Heart left ventricle (tissue), 16 donors: ENCODE measurements at regions of chr20 and their contacts with region 1.

Region 1: GRCh38 chr20:36754656-36755222 is 8.8 kb upstream of the NDRG3 start:
- DNase-seq: peak in 2 of 5 donors; percentile 51 to 52
- ATAC-seq: peak; percentile 72 to 93 (median 92)
- H3K4me3 ChIP-seq: no peak overlapping the region
- H3K27ac ChIP-seq: peak overlapping the region in 2 of 12 donors; percentile 11 to 67
- H3K4me1 ChIP-seq: peaks cover 0 to 35% (median 10%) of the 10 kb centered on the region in 12 donors
- H3K27me3 ChIP-seq: no peaks in the 10 kb centered on the region
- CTCF ChIP-seq: peak; percentile 62 to 89 (median 79)
- POLR2A ChIP-seq: no peak

Region 2: DNA sequence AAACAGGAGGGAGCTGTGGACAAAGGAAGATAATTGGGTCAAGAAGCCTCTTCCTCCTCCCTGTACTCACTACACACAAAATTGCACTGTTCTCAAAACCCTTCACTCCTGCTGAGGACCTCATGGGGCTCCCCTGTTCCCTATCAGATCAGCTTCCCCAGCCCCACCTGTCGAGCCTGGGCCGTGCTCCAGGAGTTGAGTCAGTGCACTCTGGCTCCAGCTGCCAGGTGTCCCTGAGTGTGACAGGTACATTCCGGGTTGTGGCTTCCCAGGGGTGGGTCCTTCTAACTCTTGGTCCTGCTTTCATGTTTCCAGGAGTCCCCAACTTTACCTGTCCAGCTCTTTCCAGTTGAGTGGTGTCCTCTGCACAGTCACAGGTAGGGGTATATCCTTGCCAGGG is 140.8 kb before region 1 on chr20:
- intact Hi-C with region 1: loop called in 4 of 10 experiments (anchors 2 to 5 kb)
- DNase-seq: no peak
- ATAC-seq: peak in 1 of 4 donors; percentile 14
- H3K4me3 ChIP-seq: no peak overlapping the region
- H3K27ac ChIP-seq: no peak overlapping the region
- H3K4me1 ChIP-seq: no peaks in the 10 kb centered on the region
- H3K27me3 ChIP-seq: no peaks in the 10 kb centered on the region
- CTCF ChIP-seq: no peak
- POLR2A ChIP-seq: no peak

Region 3: GRCh38 chr20:36684747-36685146 is 70.0 kb before region 1 on chr20:
- intact Hi-C with region 1: no loop called
- DNase-seq: no peak
- ATAC-seq: no peak
- H3K4me3 ChIP-seq: no peak overlapping the region
- H3K27ac ChIP-seq: no peak overlapping the region
- H3K4me1 ChIP-seq: peaks cover 0 to 13% (median 0%) of the 10 kb centered on the region in 12 donors
- H3K27me3 ChIP-seq: no peaks in the 10 kb centered on the region
- CTCF ChIP-seq: no peak
- POLR2A ChIP-seq: no peak

Region 4: DNA sequence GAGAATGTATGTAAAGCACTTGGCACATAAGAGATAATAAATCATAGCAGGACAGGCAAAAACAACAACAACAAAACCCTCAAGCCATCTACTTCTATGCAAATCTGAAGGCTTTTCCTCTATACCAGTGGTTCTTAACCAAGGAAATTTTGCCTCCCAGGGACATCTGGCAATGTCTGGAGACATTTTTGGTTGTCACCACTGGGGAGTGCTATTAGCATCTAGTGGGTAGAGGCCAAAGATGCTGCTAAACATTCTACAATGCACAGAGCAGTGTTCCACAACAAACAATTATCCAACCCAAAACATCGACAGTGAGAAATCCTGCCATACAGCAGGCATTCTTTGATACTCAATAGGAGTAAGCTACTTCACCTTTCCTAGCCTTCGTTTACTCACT is 37.1 kb before region 1 on chr20:
- intact Hi-C with region 1: loop called in 9 of 10 experiments (anchors 1 to 5 kb)
- DNase-seq: no peak
- ATAC-seq: peak in 2 of 4 donors; percentile 58 to 59
- H3K4me3 ChIP-seq: no peak overlapping the region
- H3K27ac ChIP-seq: no peak overlapping the region
- H3K4me1 ChIP-seq: peaks cover 0 to 22% (median 0%) of the 10 kb centered on the region in 12 donors
- H3K27me3 ChIP-seq: no peaks in the 10 kb centered on the region
- CTCF ChIP-seq: peak in 10 of 12 donors; percentile 6 to 58 (median 40)
- POLR2A ChIP-seq: no peak